ENCODE measurements at regions of chr4 and their contacts with region 1.

Region 1: GRCh38 chr4:109406338-109406931 is 27.2 kb upstream of the SEC24B start:
- DNase-seq: no peak
- H3K4me3 ChIP-seq: no peak overlapping the region
- H3K27ac ChIP-seq: no peak overlapping the region
- H3K4me1 ChIP-seq: no peaks in the 10 kb centered on the region
- H3K27me3 ChIP-seq: no peaks in the 10 kb centered on the region
- CTCF ChIP-seq: peak; percentile 43 to 63 (median 54)
- EP300 ChIP-seq: no peak
- POLR2A ChIP-seq: no peak

Region 2: DNA sequence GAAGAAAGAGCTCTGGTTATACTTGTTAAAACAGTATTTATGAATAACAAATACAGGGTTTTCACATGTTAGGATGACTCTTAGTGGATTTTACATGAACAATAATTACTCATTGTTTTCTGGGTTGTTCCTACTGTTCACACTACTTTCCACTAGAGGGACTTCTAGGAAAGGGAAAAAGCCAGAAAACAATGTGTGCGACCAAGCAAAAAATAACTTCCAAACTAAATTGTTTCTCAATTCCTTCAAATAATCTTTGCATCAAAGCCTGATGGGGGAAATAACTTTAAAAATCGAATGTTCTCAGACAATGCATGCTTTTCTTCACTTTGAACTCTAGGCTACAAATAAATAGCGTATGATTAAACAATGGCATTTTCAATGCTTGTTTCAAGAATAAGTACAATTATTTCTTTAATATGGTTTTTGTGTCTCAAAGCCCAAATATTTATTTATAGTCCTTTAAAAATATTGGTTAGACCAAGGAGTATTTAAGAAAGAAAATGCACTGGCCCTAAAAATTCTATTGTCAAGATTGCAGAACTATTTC is 571.5 kb before region 1 on chr4:
- in situ Hi-C with region 1: loop called in 1 of 4 experiments (anchors 25 kb)
- intact Hi-C with region 1: no loop called
- DNase-seq: no peak
- H3K4me3 ChIP-seq: no peak overlapping the region
- H3K27ac ChIP-seq: no peak overlapping the region
- H3K4me1 ChIP-seq: peaks cover 4 to 14% (median 9%) of the 10 kb centered on the region in 4 donors
- H3K27me3 ChIP-seq: no peaks in the 10 kb centered on the region
- CTCF ChIP-seq: peak; percentile 38 to 57 (median 48)
- EP300 ChIP-seq: no peak
- POLR2A ChIP-seq: no peak

Region 3: DNA sequence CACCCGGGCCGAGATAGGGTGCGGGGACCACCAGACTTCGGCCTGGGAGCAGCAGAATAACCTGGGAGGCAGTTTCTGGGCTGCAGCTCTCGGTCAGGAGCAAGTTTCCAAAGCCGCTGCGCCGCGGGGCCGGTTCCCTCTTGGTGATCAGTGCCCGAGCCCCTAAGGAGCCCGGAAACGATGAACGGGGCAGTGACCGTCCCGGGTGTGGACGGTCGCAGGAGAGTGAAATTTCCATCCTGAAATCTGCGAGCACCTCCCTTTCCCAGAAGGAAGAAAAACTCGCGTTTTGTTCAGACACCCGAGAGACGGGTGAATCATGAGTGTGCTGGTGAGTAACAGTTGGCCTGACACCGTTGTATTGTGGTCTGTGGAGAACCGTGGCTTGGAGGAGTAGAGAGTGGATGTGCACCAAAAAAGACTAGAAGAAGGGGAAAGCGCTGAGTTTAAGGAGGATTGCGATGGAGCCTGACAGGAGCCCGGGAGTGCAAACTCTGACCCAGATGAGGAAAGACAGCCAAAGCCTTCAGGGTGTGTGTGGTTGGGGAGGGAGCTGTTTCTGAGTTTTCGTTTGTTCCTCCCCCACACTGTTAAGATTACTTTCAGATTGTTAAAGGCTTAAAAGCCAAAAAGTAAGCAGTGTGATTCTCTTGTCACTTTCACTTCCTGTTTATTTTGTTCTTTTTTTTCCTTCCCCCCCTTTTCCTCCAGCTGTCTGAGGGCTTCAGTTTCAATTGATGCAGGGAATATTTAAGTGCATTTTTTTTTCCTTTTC is 154.4 kb after region 1 on chr4:
- in situ Hi-C with region 1: no loop called
- intact Hi-C with region 1: no loop called
- DNase-seq: peak; percentile 37
- H3K4me3 ChIP-seq: peak overlapping the region; percentile 66 to 82 (median 70)
- H3K27ac ChIP-seq: peak overlapping the region; percentile 86 to 89 (median 88)
- H3K4me1 ChIP-seq: peaks cover 0 to 22% (median 4%) of the 10 kb centered on the region in 4 donors
- H3K27me3 ChIP-seq: no peaks in the 10 kb centered on the region
- CTCF ChIP-seq: no peak
- EP300 ChIP-seq: no peak
- POLR2A ChIP-seq: peak; percentile 42

Region 4: DNA sequence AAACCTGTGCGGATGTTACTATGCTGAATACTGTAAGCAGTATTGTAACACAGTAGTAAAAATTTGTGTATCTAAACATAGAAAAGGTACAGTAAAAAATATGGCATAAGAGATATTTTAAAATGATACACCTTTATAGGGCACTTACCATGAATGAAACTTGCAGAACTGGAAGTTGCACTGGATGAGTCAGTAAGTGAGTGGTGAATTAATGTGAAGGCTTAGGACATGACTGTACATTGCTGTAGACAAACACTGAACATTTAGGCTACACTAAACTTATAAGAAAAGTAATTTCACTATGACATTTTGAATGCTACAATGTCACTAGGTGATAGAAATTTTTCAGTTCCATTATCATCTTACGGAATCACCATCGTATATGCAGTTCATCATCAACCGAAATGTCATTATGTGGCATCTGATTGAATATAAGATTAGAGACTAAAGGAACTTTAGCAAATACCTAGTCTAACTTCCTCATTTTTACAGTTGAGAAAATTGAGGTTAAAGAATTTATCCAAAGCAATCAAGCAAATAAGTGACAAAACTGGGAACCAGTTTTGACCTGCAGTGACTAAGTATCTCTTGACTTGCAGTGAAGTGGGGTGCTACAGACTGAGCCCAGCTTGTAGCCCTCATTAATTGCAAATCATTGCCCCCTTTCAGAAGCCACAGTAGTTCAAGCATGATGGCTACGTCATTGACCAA is 561.5 kb after region 1 on chr4:
- in situ Hi-C with region 1: loop called in 1 of 4 experiments (anchors 25 kb)
- intact Hi-C with region 1: no loop called
- DNase-seq: peak; percentile 12
- H3K4me3 ChIP-seq: no peak overlapping the region
- H3K27ac ChIP-seq: peak overlapping the region; percentile 48 to 73 (median 58)
- H3K4me1 ChIP-seq: peaks cover 0 to 31% (median 8%) of the 10 kb centered on the region in 4 donors
- H3K27me3 ChIP-seq: no peaks in the 10 kb centered on the region
- CTCF ChIP-seq: no peak
- EP300 ChIP-seq: no peak
- POLR2A ChIP-seq: no peak

Measured in transverse colon (tissue), 4 donors.